Activated CD8-positive, alpha-beta memory T cell treated with anti-CD3 and anti-CD28 coated beads, Interleukin-2, amount 10 ng/mL, durations not matched to agents 7 days and 5 days (primary cell): ENCODE measurements at regions of chr6 and their contacts with region 1.

Region 1: GRCh38 chr6:111804627-111805235 is 68.5 kb downstream of the FYN start:
- DNase-seq: peak; percentile 95
- ATAC-seq: peak; percentile 75
- H3K4me3 Mint-ChIP-seq: peak overlapping the region; percentile 38
- H3K27ac Mint-ChIP-seq: peak overlapping the region; percentile 100
- H3K4me1 Mint-ChIP-seq: peaks cover 89% of the 10 kb centered on the region
- H3K27me3 Mint-ChIP-seq: no peaks in the 10 kb centered on the region

Region 2: GRCh38 chr6:111663692-111664564 is 140.8 kb before region 1 on chr6:
- CTCF ChIA-PET with region 1: no interaction called
- DNase-seq: no peak
- ATAC-seq: no peak
- H3K4me3 Mint-ChIP-seq: no peak overlapping the region
- H3K27ac Mint-ChIP-seq: no peak overlapping the region
- H3K4me1 Mint-ChIP-seq: peaks cover 3% of the 10 kb centered on the region
- H3K27me3 Mint-ChIP-seq: no peaks in the 10 kb centered on the region

Region 3: DNA sequence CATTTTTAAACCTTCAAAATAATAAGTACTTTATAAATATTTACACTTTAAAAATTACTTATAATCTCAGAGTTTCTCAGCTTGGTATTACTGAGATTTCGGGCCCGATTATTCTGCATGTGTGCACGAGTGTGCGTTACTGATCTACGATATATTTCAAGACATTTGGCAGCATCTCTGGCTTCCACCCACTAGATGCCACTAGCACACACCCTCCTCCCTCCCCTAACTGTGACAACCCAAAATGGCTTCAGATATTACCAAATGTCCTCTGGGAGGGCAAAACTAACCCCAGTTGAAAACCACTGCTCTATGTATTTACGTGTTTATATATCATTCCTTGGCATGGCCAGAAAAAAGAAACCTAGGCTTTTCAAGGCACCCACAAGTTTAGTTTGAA is 27.4 kb before region 1 on chr6:
- CTCF ChIA-PET with region 1: interaction called, 13 read pairs
- DNase-seq: peak; percentile 70
- ATAC-seq: peak; percentile 46
- H3K4me3 Mint-ChIP-seq: peak overlapping the region; percentile 69
- H3K27ac Mint-ChIP-seq: peak overlapping the region; percentile 89
- H3K4me1 Mint-ChIP-seq: peaks cover 87% of the 10 kb centered on the region
- H3K27me3 Mint-ChIP-seq: no peaks in the 10 kb centered on the region

Region 4: GRCh38 chr6:111784433-111784832 is 20.3 kb before region 1 on chr6:
- CTCF ChIA-PET with region 1: interaction called, 14 read pairs
- DNase-seq: no peak
- ATAC-seq: no peak
- H3K4me3 Mint-ChIP-seq: no peak overlapping the region
- H3K27ac Mint-ChIP-seq: peak overlapping the region; percentile 77
- H3K4me1 Mint-ChIP-seq: peaks cover 66% of the 10 kb centered on the region
- H3K27me3 Mint-ChIP-seq: no peaks in the 10 kb centered on the region

Region 5: GRCh38 chr6:111793711-111794111 is 11.0 kb before region 1 on chr6:
- CTCF ChIA-PET with region 1: interaction called, 29 read pairs
- DNase-seq: peak; percentile 90
- ATAC-seq: peak; percentile 65
- H3K4me3 Mint-ChIP-seq: peak overlapping the region; percentile 80
- H3K27ac Mint-ChIP-seq: peak overlapping the region; percentile 98
- H3K4me1 Mint-ChIP-seq: peaks cover 66% of the 10 kb centered on the region
- H3K27me3 Mint-ChIP-seq: no peaks in the 10 kb centered on the region

Region 6: GRCh38 chr6:111818539-111819226 is 14.0 kb after region 1 on chr6:
- CTCF ChIA-PET with region 1: interaction called, 19 read pairs
- DNase-seq: peak; percentile 68
- ATAC-seq: peak; percentile 72
- H3K4me3 Mint-ChIP-seq: peak overlapping the region; percentile 34
- H3K27ac Mint-ChIP-seq: peak overlapping the region; percentile 83
- H3K4me1 Mint-ChIP-seq: peaks cover 72% of the 10 kb centered on the region
- H3K27me3 Mint-ChIP-seq: no peaks in the 10 kb centered on the region

Region 7: DNA sequence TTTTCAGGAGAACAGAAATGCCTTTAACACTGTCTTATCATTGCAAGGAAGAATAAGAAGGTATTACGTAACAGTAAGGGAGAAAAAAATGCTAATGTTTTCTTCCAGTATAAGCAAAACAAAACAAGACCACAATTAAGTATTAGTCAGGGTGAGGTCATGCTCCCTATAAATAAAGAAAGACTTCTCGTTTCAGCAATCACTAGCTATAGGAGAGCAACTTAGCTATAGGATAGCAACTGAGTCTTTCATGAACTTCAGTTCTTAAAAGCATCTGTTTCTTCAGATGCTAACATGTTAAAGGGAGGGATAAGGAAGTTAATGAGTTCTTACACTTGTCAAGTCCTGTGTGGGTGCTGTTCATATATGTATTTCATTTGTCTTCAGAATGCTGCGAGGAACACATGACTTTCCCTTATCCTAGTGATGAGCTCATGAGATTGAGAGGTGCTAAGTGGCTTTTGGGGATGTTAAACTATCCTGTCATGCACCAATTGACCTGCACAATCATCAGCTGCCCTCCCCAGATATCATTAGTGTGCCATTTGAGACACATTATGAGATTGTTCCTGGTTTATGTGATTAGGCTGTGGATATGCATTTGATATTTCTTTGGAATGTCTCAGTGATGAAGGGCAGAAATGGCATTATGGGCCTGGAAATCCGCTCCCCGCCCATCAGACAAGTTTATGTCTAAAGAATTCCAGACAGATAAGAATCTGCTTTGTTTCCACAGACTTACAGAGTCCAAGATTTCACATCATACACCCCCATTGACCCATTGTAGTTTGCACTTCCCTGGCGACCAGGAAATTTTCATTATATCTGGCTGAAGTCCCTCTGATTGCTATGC is 412.2 kb after region 1 on chr6:
- CTCF ChIA-PET with region 1: no interaction called
- DNase-seq: no peak
- ATAC-seq: no peak
- H3K4me3 Mint-ChIP-seq: no peak overlapping the region
- H3K27ac Mint-ChIP-seq: no peak overlapping the region
- H3K4me1 Mint-ChIP-seq: no peaks in the 10 kb centered on the region
- H3K27me3 Mint-ChIP-seq: peaks cover 61% of the 10 kb centered on the region